ENCODE measurements at regions of chr12 and their contacts with region 1.

Region 1: GRCh38 chr12:26832822-26833742 is at the start of gene ITPR2:
- DNase-seq: peak; percentile 94
- ATAC-seq: peak; percentile 90
- H3K4me3 Mint-ChIP-seq: peak within 1 kb of the TSS; percentile 93
- H3K27ac Mint-ChIP-seq: peak within 1 kb of the TSS; percentile 95
- H3K4me1 Mint-ChIP-seq: peaks cover 36% of the 10 kb centered on the region
- H3K27me3 Mint-ChIP-seq: no peaks in the 10 kb centered on the region
- total RNA-seq, gene ITPR2: 33.5 to 34.6 TPM

Region 2: DNA sequence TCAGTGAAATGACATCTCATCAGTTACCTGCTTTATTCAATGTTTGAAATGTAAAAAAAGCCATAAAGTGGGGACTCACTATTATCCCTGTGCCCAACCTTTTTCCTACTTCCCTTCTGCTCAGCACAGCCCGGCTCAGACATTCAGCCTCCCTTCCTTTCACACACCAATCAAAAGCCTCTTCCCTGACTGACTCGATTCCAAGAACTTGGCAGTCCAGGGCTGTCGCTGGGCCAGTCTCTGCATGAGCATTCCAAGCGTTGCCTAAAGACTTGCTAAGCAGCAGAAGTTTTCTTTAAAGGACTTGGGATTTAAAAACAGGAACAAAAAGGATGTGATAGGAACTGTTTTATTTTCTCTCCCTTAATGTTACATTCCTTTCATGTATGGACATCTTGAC is 22.8 kb before region 1 on chr12:
- CTCF ChIA-PET with region 1: no interaction called
- POLR2A ChIA-PET with region 1: no interaction called
- DNase-seq: no peak
- ATAC-seq: no peak
- H3K4me3 Mint-ChIP-seq: no peak overlapping the region
- H3K27ac Mint-ChIP-seq: no peak overlapping the region
- H3K4me1 Mint-ChIP-seq: peaks cover 10% of the 10 kb centered on the region
- H3K27me3 Mint-ChIP-seq: no peaks in the 10 kb centered on the region

Region 3: GRCh38 chr12:26821212-26821701 is 11.8 kb before region 1 on chr12:
- CTCF ChIA-PET with region 1: interaction called, 26 read pairs
- POLR2A ChIA-PET with region 1: interaction called, 9 read pairs
- DNase-seq: no peak
- ATAC-seq: no peak
- H3K4me3 Mint-ChIP-seq: no peak overlapping the region
- H3K27ac Mint-ChIP-seq: no peak overlapping the region
- H3K4me1 Mint-ChIP-seq: peaks cover 2% of the 10 kb centered on the region
- H3K27me3 Mint-ChIP-seq: no peaks in the 10 kb centered on the region

Region 4: GRCh38 chr12:26845057-26845666 is 12.1 kb after region 1 on chr12:
- CTCF ChIA-PET with region 1: interaction called, 22 read pairs
- POLR2A ChIA-PET with region 1: interaction called, 8 read pairs
- DNase-seq: no peak
- ATAC-seq: no peak
- H3K4me3 Mint-ChIP-seq: no peak overlapping the region
- H3K27ac Mint-ChIP-seq: no peak overlapping the region
- H3K4me1 Mint-ChIP-seq: peaks cover 8% of the 10 kb centered on the region
- H3K27me3 Mint-ChIP-seq: peaks cover 17% of the 10 kb centered on the region

Region 5: DNA sequence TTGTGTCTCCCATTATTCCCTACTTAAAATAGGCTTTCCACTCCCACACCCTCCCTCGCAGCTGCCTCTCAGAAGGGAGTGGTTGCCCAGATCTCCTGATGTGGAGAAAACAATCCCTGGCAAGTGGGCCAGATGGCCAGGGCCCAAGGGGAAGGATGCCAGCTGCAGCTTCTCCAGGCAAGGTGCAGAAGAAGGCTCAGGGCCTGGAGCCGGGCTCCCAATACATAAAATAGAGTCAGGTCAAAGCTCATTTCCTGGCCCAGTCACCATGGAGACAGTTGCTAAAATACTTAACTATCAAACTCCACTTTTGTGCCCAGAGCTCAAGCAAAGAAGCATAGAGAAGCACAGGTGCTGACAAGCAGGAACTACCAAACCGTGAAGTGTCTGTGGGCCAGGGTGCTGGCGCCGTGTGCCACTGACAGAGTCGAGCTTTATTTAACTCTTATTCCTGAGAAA is 45.6 kb after region 1 on chr12:
- CTCF ChIA-PET with region 1: interaction called, 38 read pairs
- POLR2A ChIA-PET with region 1: interaction called, 3 read pairs
- DNase-seq: no peak
- ATAC-seq: no peak
- H3K4me3 Mint-ChIP-seq: no peak overlapping the region
- H3K27ac Mint-ChIP-seq: no peak overlapping the region
- H3K4me1 Mint-ChIP-seq: no peaks in the 10 kb centered on the region
- H3K27me3 Mint-ChIP-seq: peaks cover 5% of the 10 kb centered on the region

Region 6: DNA sequence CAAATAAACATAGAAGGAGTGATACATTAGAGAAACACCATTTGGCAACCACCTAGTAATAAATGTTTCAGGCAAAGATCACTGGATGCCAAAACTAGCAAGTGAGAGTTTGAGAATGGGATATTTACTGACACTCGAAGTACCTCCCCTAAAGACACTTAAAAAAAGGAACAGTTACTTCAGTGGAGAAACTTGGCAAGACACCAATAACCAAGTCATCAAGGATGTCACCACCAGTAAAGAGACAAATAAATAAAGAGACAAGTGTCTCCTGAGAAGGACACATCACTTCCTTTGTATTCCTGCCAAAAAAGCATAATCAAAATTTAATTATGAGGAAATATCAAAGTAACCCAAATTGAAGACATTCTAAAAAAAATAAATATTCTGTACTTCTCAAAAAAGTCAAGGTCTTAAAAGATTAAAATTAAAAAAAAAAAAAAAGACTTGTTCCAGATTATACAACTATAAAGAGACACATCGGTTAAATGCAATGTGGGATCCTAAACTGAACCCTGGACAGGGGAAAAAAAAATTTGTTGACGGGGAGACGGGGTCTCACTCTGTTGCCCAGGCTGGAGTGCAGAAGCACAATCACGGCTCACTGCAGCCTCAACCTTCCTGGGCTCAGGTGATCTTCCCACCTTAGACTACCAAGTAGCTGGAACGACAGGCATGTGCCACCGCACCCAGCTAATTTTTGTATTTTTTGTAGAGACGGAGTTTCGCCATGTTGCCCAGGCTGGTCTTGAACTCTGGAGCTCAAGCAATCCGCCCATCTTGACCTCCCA is 154.7 kb after region 1 on chr12:
- CTCF ChIA-PET with region 1: no interaction called
- POLR2A ChIA-PET with region 1: no interaction called
- DNase-seq: no peak
- ATAC-seq: no peak
- H3K4me3 Mint-ChIP-seq: no peak overlapping the region
- H3K27ac Mint-ChIP-seq: no peak overlapping the region
- H3K4me1 Mint-ChIP-seq: peaks cover 4% of the 10 kb centered on the region
- H3K27me3 Mint-ChIP-seq: no peaks in the 10 kb centered on the region

Region 7: DNA sequence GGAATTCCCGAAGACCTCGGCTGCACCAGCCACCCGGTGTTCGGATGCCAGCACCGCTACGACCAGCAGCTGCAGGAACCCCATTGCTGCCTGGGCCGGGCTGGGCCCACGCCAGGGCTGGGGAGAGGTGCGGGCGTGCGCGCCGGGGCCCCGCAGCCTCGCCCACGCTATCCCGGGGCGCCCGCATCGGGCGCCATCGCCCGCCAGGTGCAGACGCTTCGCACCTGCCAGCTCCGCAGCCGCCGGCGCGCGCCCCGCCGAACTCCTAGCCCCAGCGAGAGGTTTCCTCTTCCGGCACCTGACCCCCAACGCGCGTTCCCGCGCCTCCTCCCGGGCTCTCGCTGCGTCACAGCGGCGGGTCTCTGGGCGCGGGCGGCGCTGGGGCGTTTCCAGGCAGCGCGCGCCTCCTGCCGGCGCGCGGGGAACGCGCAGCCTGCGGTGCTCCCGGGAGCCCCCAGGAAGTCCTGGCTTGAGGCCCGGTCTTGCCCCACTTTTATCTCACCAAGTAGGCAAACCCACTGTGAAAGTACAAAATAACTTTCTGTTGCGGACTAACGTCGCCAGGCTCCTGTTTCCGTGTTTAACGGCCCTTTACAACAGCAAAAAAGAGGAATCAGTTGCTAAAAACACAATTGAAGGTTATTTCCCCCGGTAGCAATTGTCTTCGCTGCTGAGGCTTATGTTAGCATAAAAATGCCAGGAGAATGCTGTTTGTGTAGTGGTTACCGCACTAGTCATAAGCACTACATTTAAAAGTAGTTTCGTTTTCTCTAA is 181.2 kb after region 1 on chr12 and contains the start of gene TM7SF3:
- CTCF ChIA-PET with region 1: interaction called, 23 read pairs
- POLR2A ChIA-PET with region 1: interaction called, 9 read pairs
- DNase-seq: peak; percentile 97
- ATAC-seq: peak; percentile 88
- H3K4me3 Mint-ChIP-seq: peak within 1 kb of the TSS; percentile 93
- H3K27ac Mint-ChIP-seq: peak within 1 kb of the TSS; percentile 90
- H3K4me1 Mint-ChIP-seq: peaks cover 58% of the 10 kb centered on the region
- H3K27me3 Mint-ChIP-seq: no peaks in the 10 kb centered on the region
- total RNA-seq, gene TM7SF3: 46.2 to 54.0 TPM